Right ventricle myocardium inferior (tissue), 1 donor: ENCODE measurements at regions of chr4 and their contacts with region 1.

Region 1: GRCh38 chr4:185210102-185210981 is 944 bp downstream of the SNX25 start:
- DNase-seq: peak; percentile 78
- ATAC-seq: peak; percentile 33

Region 2: DNA sequence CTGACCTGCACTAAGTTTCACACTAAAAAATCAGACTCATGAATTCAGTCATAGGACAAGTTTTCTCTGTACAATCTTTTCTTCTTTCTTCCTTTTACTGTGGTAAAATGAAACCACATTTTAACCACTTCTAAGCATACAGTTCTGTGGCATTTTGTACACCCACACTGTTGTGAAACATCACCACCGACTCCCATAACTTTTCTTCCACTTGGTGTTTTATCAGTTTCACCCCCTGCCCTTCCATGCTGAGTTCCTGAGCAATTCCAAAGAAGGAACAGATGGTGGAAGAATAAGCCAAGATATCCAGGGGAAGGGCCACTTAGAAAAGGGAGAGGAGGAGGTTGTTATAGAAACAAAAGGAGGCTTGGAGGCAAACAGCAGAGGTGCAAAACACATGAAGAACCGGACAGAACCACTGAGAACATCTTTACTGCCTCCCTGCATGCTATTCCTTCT is 44.7 kb before region 1 on chr4:
- intact Hi-C with region 1: no loop called
- DNase-seq: no peak
- ATAC-seq: no peak

Region 3: DNA sequence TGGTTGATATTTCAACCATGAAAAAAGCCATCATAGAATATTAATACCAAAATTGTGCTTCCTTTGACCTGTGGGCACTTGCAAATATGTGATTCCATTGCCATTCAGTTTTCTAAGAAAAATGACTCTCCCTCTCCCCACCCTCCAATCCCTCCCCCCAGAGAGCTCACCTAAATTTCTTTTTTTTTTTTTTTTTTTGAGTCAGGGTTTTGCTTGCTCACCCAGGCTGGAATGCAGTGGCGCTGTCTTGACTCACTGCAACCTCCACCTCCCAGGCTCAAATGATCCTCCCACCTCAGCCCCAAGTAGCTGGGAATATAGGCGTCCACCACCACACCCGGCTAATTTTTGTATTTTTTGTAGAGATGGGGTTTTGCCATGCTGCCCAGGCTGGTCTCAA is 46.1 kb after region 1 on chr4:
- intact Hi-C with region 1: loop called (anchors 5 kb)
- DNase-seq: no peak
- ATAC-seq: no peak

Region 4: DNA sequence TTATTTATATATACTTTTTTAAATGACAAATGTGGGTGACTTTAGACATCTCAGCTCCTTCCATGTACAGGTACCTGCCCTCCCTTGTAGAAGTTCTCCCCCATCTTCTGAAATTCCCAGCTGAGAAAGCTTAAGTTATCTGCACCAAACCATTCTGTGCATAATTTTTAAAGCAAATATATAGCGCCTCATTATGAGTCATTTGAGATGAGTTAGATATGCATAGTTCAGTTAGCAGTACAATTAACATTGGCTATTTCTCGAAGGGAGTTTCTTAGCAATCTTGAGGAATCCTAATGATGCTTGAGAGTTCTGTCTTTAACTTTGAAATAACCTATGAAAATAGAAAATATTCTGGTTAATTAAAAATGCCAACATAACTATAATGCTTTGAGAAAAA is 234.9 kb after region 1 on chr4:
- intact Hi-C with region 1: no loop called
- DNase-seq: no peak
- ATAC-seq: no peak

Region 5: DNA sequence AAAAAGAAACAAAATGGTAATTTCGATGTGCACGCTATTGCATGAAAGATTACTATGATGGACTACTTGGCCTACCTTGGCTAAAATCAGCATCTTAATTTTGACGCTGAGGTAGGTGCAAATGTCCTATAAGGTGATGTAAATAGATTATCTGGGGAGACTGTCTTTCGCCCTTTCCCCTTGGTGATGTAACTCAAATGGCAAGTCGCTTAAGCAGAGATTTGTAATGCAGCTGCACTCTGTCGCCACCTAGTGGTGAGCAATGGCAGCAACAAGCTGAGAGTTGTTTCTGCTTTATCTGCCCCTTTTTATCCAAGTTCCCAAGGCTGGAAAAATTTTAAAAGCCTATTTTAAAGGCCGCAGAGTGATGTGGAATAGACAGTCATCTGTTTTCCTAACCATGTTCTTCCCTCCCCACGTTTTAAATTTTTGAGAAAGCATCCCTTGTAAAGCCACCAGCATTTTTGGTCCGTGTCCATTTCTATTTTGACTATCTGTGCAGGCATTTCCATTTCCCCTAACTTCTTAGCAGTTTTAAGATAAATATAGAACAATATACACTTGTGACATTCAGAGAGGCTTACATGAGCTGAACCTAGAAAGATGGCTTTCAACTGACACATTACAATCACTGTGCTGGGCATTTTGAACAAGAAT is 387.3 kb after region 1 on chr4:
- intact Hi-C with region 1: loop called (anchors 10 kb)
- DNase-seq: peak; percentile 80
- ATAC-seq: peak; percentile 56